IMR-90 (cell line): ENCODE measurements at regions of chr3 and their contacts with region 1.

Region 1: GRCh38 chr3:42118762-42119361 is 27.7 kb downstream of the TRAK1 start:
- DNase-seq: peak; percentile 49
- ATAC-seq: peak; percentile 54; the same call in 1 of the 2 replicates
- H3K4me3 ChIP-seq: no peak overlapping the region
- H3K27ac ChIP-seq: no peak overlapping the region
- H3K4me1 ChIP-seq: peaks cover 11% of the 10 kb centered on the region
- H3K27me3 ChIP-seq: no peaks in the 10 kb centered on the region
- CTCF ChIP-seq: peak; percentile 37
- POLR2A ChIP-seq: no peak
- RAD21 ChIP-seq: peak; percentile 54

Region 2: GRCh38 chr3:42184651-42185443 is 66.0 kb after region 1 on chr3:
- CTCF ChIA-PET with region 1: no interaction called
- POLR2A ChIA-PET with region 1: no interaction called
- dilution Hi-C with region 1: no loop called
- in situ Hi-C with region 1: loop called (anchors 5 kb)
- intact Hi-C with region 1: loop called (anchors 2 kb)
- DNase-seq: peak; percentile 79
- ATAC-seq: peak; percentile 95
- H3K4me3 ChIP-seq: no peak overlapping the region
- H3K27ac ChIP-seq: no peak overlapping the region
- H3K4me1 ChIP-seq: peaks cover 12% of the 10 kb centered on the region
- H3K27me3 ChIP-seq: no peaks in the 10 kb centered on the region
- CTCF ChIP-seq: no peak
- POLR2A ChIP-seq: no peak
- RAD21 ChIP-seq: no peak